Transverse colon (tissue), 4 donors: ENCODE measurements at regions of chr18 and their contacts with region 1.

Region 1: DNA sequence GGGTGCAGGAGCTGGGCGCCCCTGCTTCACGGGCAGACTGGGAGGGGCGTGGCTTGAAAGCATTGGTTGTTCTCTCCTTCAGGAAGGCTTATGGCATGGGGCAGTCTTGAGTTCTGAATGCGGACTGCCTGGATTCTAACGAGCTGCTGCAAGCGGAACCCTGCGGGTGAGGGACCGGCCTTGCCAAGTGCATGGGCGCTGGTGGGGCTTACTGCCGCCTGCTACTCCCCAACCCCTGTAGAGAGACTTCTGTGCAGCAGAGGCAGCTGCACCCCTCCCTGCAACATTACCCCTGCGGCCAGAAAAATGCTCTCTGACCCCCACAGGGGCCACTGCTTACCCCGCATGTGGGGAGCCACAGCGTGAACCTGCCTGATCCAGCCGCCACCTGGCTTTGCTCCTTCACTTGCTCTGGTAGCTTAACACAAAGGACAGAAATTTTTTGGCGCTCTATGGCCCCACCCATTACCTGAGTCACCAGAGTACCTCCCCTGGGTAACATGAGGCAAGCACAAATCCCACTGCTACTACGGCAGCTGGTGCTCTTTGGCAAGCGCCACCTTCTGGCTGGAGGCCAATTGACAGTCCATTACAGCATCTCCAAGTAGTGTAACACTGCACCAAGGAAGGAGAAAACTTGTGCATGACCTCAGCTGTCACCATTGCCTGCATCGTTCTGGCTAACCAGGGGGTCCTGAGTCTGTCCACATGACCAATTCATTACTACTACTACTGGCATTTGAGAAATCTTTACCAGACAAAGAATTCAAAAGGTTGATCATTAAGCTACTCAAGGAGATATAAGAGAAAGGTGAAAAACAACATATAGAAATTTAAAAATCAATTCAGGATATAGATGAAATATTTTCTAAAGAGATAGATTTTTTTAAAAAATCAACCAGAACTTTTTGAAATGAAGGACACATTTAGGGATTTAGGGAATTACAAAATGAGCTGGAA is 35.4 kb downstream of the MYL12B start:
- DNase-seq: peak; percentile 93
- H3K4me3 ChIP-seq: peak overlapping the region; percentile 30 to 59 (median 50)
- H3K27ac ChIP-seq: peak overlapping the region; percentile 53 to 79 (median 71)
- H3K4me1 ChIP-seq: peaks cover 0 to 8% (median 3%) of the 10 kb centered on the region in 4 donors
- H3K27me3 ChIP-seq: peaks cover 16% of the 10 kb centered on the region
- CTCF ChIP-seq: peak; percentile 26 to 59 (median 51)
- EP300 ChIP-seq: no peak
- POLR2A ChIP-seq: no peak

Region 2: GRCh38 chr18:3217948-3218647 is 79.2 kb before region 1 on chr18:
- in situ Hi-C with region 1: no loop called
- intact Hi-C with region 1: no loop called
- DNase-seq: peak; percentile 61
- H3K4me3 ChIP-seq: peak overlapping the region in 2 of 4 donors; percentile 1 to 7
- H3K27ac ChIP-seq: peak overlapping the region; percentile 79 to 88 (median 80)
- H3K4me1 ChIP-seq: peaks cover 5 to 42% (median 17%) of the 10 kb centered on the region in 4 donors
- H3K27me3 ChIP-seq: no peaks in the 10 kb centered on the region
- CTCF ChIP-seq: no peak
- EP300 ChIP-seq: peak; percentile 13
- POLR2A ChIP-seq: peak; percentile 58

Region 3: GRCh38 chr18:3447895-3448837 is 150.9 kb after region 1 on chr18:
- in situ Hi-C with region 1: loop called in 1 of 4 experiments (anchors 25 kb)
- intact Hi-C with region 1: no loop called
- DNase-seq: peak; percentile 95
- H3K4me3 ChIP-seq: peak overlapping the region; percentile 68 to 87 (median 80)
- H3K27ac ChIP-seq: peak overlapping the region; percentile 98 to 99 (median 99)
- H3K4me1 ChIP-seq: peaks cover 4 to 20% (median 10%) of the 10 kb centered on the region in 4 donors
- H3K27me3 ChIP-seq: no peaks in the 10 kb centered on the region
- CTCF ChIP-seq: peak in 1 of 5 experiments; percentile 15
- EP300 ChIP-seq: no peak
- POLR2A ChIP-seq: peak; percentile 97

Region 4: GRCh38 chr18:3585656-3586509 is 288.6 kb after region 1 on chr18:
- in situ Hi-C with region 1: loop called in 2 of 4 experiments (anchors 10 to 25 kb)
- intact Hi-C with region 1: no loop called
- DNase-seq: peak; percentile 90
- H3K4me3 ChIP-seq: no peak overlapping the region
- H3K27ac ChIP-seq: peak overlapping the region in 1 of 4 donors; percentile 14
- H3K4me1 ChIP-seq: peaks cover 0 to 25% (median 8%) of the 10 kb centered on the region in 4 donors
- H3K27me3 ChIP-seq: no peaks in the 10 kb centered on the region
- CTCF ChIP-seq: peak; percentile 76 to 92 (median 79)
- EP300 ChIP-seq: no peak
- POLR2A ChIP-seq: no peak

Region 5: GRCh38 chr18:3593904-3594661 is 296.8 kb after region 1 on chr18:
- in situ Hi-C with region 1: loop called in 2 of 4 experiments (anchors 10 to 25 kb)
- intact Hi-C with region 1: no loop called
- DNase-seq: peak; percentile 92
- H3K4me3 ChIP-seq: peak overlapping the region; percentile 20 to 45 (median 37)
- H3K27ac ChIP-seq: peak overlapping the region; percentile 96 to 99 (median 98)
- H3K4me1 ChIP-seq: peaks cover 22 to 47% (median 42%) of the 10 kb centered on the region in 4 donors
- H3K27me3 ChIP-seq: no peaks in the 10 kb centered on the region
- CTCF ChIP-seq: peak; percentile 91 to 96 (median 95)
- EP300 ChIP-seq: peak; percentile 59
- POLR2A ChIP-seq: peak; percentile 80

Region 6: DNA sequence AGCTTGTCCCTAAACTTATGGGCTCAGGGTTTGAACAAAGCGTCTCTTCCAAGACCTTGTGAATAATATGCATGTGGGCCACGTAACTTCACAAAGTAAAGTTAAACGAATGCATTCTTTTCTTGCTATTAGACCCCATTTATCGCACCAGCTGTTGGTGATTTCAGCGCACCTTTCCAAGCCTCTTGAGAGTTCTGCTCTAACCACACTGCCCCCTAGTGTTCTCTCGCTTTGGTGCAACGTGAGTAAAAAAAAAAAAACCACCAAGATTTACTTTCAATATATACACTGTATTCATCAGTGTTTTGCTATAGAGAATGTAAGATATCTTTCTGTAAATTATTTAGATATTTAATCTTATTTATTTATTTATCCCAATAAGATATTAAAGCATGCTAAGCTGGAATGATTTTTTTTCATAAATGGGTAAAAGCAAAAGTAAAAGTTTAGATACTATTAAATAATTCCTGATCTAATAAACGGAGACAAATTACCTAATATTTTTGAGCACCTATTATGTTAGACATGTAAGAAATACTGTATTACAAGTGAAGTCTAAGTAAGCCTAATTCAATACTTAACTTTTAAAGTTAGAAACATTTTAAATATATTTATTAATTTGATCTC is 698.3 kb after region 1 on chr18:
- in situ Hi-C with region 1: loop called in 2 of 4 experiments (anchors 25 kb)
- intact Hi-C with region 1: no loop called
- DNase-seq: peak; percentile 56
- H3K4me3 ChIP-seq: no peak overlapping the region
- H3K27ac ChIP-seq: no peak overlapping the region
- H3K4me1 ChIP-seq: no peaks in the 10 kb centered on the region
- H3K27me3 ChIP-seq: no peaks in the 10 kb centered on the region
- CTCF ChIP-seq: peak; percentile 59 to 89 (median 81)
- EP300 ChIP-seq: no peak
- POLR2A ChIP-seq: no peak

Region 7: DNA sequence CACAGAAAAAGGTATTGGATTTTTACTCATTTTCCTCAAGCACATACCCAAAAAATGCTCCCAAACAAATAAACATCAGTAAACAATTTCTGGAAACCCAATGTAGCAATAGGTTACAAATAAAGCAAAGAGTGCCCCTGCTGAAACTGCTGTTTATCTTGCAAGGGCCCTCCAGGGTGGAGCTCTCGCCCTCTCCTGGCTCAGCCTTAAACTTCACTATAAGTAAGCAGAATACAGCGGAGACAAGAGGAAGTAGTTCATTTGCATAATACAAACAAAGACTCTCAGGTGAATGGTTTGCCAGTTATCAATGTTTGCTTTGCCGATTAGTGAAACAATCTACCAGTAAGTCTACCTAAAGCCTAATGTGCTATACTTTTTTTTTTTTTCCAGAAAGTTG is 720.2 kb after region 1 on chr18:
- in situ Hi-C with region 1: loop called in 1 of 4 experiments (anchors 25 kb)
- intact Hi-C with region 1: no loop called
- DNase-seq: no peak
- H3K4me3 ChIP-seq: no peak overlapping the region
- H3K27ac ChIP-seq: no peak overlapping the region
- H3K4me1 ChIP-seq: no peaks in the 10 kb centered on the region
- H3K27me3 ChIP-seq: no peaks in the 10 kb centered on the region
- CTCF ChIP-seq: no peak
- EP300 ChIP-seq: no peak
- POLR2A ChIP-seq: no peak